ENCODE measurements at regions of chr1 and their contacts with region 1.

Region 1: DNA sequence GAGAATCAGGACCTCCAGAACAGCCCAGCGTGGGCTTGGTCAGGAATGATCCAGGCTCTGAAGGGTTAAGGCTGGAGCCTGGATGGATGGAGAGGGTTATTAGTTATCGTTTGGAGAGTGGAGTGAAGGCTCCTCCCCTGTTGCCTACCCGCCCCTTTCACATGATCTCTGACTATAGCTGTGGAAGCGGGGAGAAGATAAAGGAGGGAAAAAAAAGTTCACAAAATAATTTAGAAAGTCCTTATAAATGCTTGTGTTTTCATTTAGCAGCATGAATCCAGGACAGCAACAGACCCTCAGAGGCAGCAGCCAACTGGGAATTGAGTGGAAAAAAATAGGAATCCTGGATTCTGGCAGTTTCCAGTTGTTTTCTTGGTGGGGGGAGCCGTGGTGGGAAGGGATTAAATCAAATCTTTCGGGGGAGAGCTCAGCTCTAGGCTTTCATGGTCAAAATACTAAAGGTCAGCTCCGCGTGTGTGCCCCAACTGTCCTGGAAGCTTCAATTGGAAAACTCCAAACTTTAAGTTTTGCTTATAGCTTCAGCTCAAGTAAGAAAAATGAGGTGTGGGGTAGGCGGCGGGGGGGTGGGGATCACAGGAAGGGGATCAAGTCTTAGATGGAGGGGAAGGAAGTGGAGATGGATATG is 595 bp upstream of the DDR2 start:
- DNase-seq: no peak
- H3K4me3 Mint-ChIP-seq: no peak overlapping the region
- H3K27ac Mint-ChIP-seq: no peak overlapping the region
- H3K4me1 Mint-ChIP-seq: peaks cover 4% of the 10 kb centered on the region
- H3K27me3 Mint-ChIP-seq: peaks cover 23% of the 10 kb centered on the region

Region 2: DNA sequence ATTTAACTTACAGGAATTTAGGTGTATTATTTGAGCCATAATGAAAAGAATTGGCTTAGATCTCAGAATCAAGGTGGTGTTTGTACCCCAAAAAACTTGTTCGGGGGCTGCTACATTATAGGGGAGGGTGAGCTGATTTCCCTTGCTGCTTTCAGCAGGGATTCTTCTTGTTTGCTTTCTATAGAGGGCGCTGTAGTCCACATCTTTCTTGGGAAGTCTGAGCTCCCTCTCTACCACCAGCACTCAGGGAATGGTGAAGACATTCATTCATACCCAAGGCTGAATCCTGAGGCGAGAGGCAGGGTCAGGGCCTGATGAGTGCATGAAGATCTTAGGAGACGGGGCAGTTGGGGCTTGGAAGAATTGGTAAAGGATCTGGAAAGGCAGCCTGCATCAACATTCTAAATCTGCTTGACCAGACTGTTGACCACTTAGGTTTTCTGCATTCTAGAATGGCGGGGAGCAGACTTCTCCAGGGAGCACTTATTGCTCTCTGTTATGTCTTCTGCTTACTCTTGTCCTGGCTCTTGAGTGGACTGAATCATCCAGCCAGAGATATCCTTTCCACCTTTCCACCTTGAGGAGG is 273.9 kb before region 1 on chr1:
- intact Hi-C with region 1: loop called (anchors 2 kb)
- DNase-seq: no peak
- H3K4me3 Mint-ChIP-seq: no peak overlapping the region
- H3K27ac Mint-ChIP-seq: no peak overlapping the region
- H3K4me1 Mint-ChIP-seq: no peaks in the 10 kb centered on the region
- H3K27me3 Mint-ChIP-seq: no peaks in the 10 kb centered on the region

Measured in activated T-helper 2 cell treated with anti-CD3 and anti-CD28 coated beads, Interferon-gamma antibody, Interleukin-2, Interleukin-4, amounts not matched to agents 10 μg/mL and 5 μg/mL and 100 μg/mL, durations not matched to agents 14 hours and 24 hours and 36 hours (primary cell).